Dendritic cell treated with granulocyte-macrophage colony-stimulating factor and Interleukin-4, amounts not matched to agents 40 ng/mL and 50 ng/mL, for 4 days (primary cell): ENCODE measurements at regions of chr12 and their contacts with region 1.

Region 1: GRCh38 chr12:110937104-110937641 is 16.8 kb upstream of the MYL2 start:
- H3K4me3 Mint-ChIP-seq: no peak overlapping the region
- H3K27ac Mint-ChIP-seq: no peak overlapping the region
- H3K4me1 Mint-ChIP-seq: peaks cover 16% of the 10 kb centered on the region
- H3K27me3 Mint-ChIP-seq: peaks cover 14% of the 10 kb centered on the region

Region 2: GRCh38 chr12:110253176-110253575 is 684.0 kb before region 1 on chr12:
- intact Hi-C with region 1: no loop called
- H3K4me3 Mint-ChIP-seq: peak overlapping the region; percentile 17
- H3K27ac Mint-ChIP-seq: peak overlapping the region; percentile 79
- H3K4me1 Mint-ChIP-seq: peaks cover 46% of the 10 kb centered on the region
- H3K27me3 Mint-ChIP-seq: peaks cover 3% of the 10 kb centered on the region

Region 3: DNA sequence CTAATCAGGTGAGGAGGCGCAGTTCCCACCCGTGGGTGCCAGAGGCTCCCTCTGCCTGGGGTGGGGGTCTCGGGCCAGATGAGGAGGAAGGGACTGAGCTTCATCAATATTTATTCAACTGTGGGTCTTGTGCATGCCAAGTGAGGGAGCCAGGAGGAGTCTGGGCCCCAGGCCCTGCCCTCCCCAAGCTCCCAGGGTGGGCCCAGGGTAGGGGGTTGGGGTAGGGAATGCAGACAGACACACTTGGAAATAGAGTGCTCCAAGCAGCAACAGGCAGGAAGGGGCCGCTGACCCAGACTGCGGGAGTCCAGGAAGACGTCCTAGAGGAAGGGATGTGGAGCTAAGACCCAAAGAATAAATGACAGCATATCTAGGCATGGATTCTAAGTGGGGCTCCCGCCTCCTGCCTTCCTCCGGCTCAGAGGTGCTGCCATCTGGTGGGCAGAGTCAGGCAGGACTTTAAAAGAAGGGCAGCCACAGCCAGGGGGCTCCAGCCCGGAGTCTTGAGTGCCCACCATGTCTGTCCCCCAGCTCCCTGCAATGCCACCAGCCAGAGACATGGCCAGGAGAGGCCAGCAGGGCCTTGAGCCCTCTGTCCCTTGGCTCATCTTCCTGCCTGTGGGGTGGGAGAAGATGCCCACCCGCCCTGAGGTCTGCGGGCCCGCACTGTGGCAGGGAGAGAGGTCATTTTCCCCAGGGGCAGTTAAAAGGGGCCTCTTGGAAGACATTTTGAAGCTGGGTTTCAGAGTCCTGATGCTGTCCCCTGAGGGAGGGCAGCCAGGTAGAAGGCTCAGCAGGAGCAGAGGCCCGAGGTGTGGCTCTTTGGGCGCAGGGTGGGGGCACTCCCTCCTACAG is 361.6 kb after region 1 on chr12:
- intact Hi-C with region 1: loop called (anchors 1 kb)
- H3K4me3 Mint-ChIP-seq: no peak overlapping the region
- H3K27ac Mint-ChIP-seq: no peak overlapping the region
- H3K4me1 Mint-ChIP-seq: no peaks in the 10 kb centered on the region
- H3K27me3 Mint-ChIP-seq: peaks cover 4% of the 10 kb centered on the region

Region 4: DNA sequence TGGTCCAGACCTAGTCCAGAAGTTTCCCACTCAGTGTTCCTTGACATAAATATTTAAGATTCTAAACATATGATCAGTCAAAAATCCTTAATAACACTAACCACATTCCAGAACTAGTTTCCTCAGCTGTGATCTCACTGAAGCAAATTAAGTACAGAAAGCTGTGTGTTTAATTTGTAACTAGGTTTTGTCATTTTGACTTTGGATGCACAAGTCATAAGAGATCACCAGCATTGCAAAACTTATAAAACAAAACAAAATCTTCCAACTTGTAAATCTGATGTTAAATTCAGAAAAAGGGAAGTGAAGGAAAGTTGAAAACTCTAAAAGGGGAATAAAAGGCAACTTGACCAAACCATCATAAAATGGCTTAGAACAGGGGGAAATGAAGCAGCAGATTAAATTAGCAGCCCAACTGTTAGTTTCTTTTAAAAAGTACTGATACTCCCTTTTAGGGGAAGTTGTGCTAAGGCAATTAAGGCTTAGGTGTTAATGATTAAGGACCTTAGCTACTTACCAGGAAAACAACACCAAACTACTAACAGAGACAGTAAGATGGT is 525.1 kb after region 1 on chr12:
- intact Hi-C with region 1: loop called (anchors 10 kb)
- H3K4me3 Mint-ChIP-seq: no peak overlapping the region
- H3K27ac Mint-ChIP-seq: no peak overlapping the region
- H3K4me1 Mint-ChIP-seq: peaks cover 28% of the 10 kb centered on the region
- H3K27me3 Mint-ChIP-seq: no peaks in the 10 kb centered on the region